CD14-positive monocyte (primary cell): ENCODE measurements at regions of chr2 and their contacts with region 1.

Region 1: DNA sequence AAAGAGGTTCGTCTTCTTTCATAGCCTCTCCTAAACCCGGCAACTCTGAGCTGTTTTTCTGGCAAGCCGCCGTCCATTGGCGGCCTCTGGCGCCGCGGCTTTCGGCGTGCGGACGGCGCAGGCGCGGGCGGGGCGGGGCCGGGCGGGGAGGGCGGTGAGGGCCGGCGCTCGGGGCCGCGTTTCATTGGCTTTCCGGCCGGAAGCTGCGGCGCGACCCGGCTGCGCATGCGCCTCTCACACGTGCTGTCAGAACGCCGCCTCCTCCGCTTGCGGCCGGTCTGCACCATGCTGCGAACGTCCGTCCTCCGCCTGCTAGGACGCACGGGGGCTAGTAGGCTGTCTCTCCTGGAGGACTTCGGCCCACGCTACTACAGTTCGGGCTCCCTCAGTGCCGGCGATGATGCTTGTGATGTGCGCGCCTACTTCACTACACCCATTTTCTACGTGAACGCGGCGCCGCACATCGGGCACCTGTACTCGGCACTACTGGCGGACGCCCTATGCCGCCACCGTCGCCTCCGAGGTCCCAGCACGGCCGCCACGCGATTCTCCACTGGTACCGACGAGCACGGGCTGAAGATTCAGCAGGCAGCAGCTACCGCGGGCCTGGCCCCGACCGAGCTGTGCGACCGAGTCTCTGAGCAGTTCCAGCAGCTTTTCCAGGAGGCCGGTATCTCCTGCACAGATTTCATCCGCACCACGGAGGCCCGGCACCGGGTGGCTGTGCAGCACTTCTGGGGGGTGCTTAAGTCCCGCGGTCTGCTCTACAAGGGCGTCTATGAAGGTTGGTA is at the start of gene MARS2:
- DNase-seq: peak; percentile 91 to 93 (median 91)
- H3K4me3 ChIP-seq: peak within 1 kb of the TSS; percentile 90 to 96 (median 95)
- H3K4me3 Mint-ChIP-seq: peak within 1 kb of the TSS; percentile 91 to 92
- H3K27ac ChIP-seq: peak within 1 kb of the TSS; percentile 6 to 78
- H3K27ac Mint-ChIP-seq: peak within 1 kb of the TSS; percentile 70 to 89 (median 84)
- H3K4me1 ChIP-seq: peaks cover 24 to 31% of the 10 kb centered on the region in 2 donors
- H3K4me1 Mint-ChIP-seq: peaks cover 40% of the 10 kb centered on the region
- H3K27me3 ChIP-seq: no peaks in the 10 kb centered on the region
- H3K27me3 Mint-ChIP-seq: peaks cover 2 to 7% (median 4%) of the 10 kb centered on the region in 3 donors
- CTCF ChIP-seq: no peak
- polyA plus RNA-seq, gene MARS2: 0.66 to 1.3 (median 0.93) TPM

Region 2: DNA sequence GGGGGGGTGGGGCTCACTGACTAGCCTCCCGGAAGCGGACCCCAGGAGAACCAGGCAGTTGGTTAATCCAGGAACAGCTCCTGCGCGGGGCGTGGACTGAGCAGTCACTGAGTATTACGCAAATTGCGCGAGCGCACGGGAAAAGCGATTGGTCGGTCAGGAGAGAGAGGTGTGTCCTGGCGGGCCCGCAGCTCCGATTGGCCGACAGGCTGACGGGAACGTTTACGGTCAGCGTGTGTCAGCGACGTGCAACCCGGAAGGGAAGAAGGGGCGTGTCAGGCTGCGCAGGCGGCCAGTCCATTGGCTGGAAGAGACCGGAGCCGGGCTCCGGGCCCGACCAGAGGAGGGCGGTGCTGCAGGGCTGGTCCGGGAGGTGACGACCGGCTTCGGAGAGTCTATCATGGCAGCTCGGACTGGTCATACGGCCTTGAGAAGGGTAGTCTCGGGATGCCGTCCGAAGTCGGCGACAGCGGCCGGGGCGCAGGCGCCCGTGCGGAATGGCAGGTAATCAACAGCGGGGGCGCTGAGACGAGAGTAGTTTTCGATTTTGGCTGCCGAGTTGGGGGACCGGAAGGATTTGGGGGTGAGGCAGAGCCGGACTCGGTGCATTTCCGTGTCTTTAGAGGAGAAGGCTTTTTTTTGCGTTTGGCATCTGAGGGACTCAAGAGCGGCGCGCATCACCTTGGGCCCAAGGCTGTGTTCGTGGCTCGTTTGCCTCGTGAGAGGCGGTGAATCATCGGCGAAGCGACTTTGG is 252.0 kb before region 1 on chr2 and contains the start of gene COQ10B:
- intact Hi-C with region 1: loop called in 1 of 2 experiments (anchors 10 kb)
- DNase-seq: peak; percentile 100
- H3K4me3 ChIP-seq: peak within 1 kb of the TSS; percentile 67 to 90 (median 75)
- H3K4me3 Mint-ChIP-seq: peak within 1 kb of the TSS; percentile 97 to 98
- H3K27ac ChIP-seq: peak within 1 kb of the TSS; percentile 94 to 100
- H3K27ac Mint-ChIP-seq: peak within 1 kb of the TSS; percentile 100
- H3K4me1 ChIP-seq: peaks cover 14 to 25% of the 10 kb centered on the region in 2 donors
- H3K4me1 Mint-ChIP-seq: peaks cover 36% of the 10 kb centered on the region
- H3K27me3 ChIP-seq: no peaks in the 10 kb centered on the region
- H3K27me3 Mint-ChIP-seq: peaks cover 0 to 4% (median 0%) of the 10 kb centered on the region in 3 donors
- CTCF ChIP-seq: no peak
- polyA plus RNA-seq, gene COQ10B: 6.7 to 46.6 (median 38.3) TPM

Region 3: GRCh38 chr2:197515739-197516392 is 189.4 kb before region 1 on chr2 and contains the start of gene MOB4:
- intact Hi-C with region 1: loop called in 1 of 2 experiments (anchors 10 kb)
- DNase-seq: peak; percentile 95 to 97 (median 95)
- H3K4me3 ChIP-seq: peak within 1 kb of the TSS; percentile 78 to 88 (median 87)
- H3K4me3 Mint-ChIP-seq: peak within 1 kb of the TSS; percentile 88 to 96
- H3K27ac ChIP-seq: peak within 1 kb of the TSS; percentile 94 to 95
- H3K27ac Mint-ChIP-seq: peak within 1 kb of the TSS; percentile 92 to 98 (median 96)
- H3K4me1 ChIP-seq: peaks cover 15 to 27% of the 10 kb centered on the region in 2 donors
- H3K4me1 Mint-ChIP-seq: peaks cover 22% of the 10 kb centered on the region
- H3K27me3 ChIP-seq: no peaks in the 10 kb centered on the region
- H3K27me3 Mint-ChIP-seq: no peaks in the 10 kb centered on the region
- CTCF ChIP-seq: no peak
- polyA plus RNA-seq, gene MOB4: 14.8 to 32.4 (median 30.4) TPM

Region 4: GRCh38 chr2:197786010-197786877 is 80.9 kb after region 1 on chr2:
- intact Hi-C with region 1: loop called in 1 of 2 experiments (anchors 10 kb)
- DNase-seq: peak in 1 of 3 donors; percentile 13
- H3K4me3 ChIP-seq: peak overlapping the region; percentile 23 to 71 (median 24)
- H3K4me3 Mint-ChIP-seq: peak overlapping the region; percentile 73 to 86
- H3K27ac ChIP-seq: no peak overlapping the region
- H3K27ac Mint-ChIP-seq: peak overlapping the region in 1 of 7 donors; percentile 24
- H3K4me1 ChIP-seq: peaks cover 7 to 12% of the 10 kb centered on the region in 2 donors
- H3K4me1 Mint-ChIP-seq: peaks cover 13% of the 10 kb centered on the region
- H3K27me3 ChIP-seq: peaks cover 8 to 30% of the 10 kb centered on the region in 2 donors
- H3K27me3 Mint-ChIP-seq: peaks cover 22 to 26% (median 25%) of the 10 kb centered on the region in 3 donors
- CTCF ChIP-seq: peak; percentile 76